ENCODE measurements at regions of chr3 and their contacts with region 1.

Region 1: GRCh38 chr3:108221911-108222852 is at the start of gene IFT57:
- DNase-seq: peak; percentile 95 to 99
- H3K4me3 ChIP-seq: peak within 1 kb of the TSS; percentile 67 to 79
- H3K27ac ChIP-seq: peak within 1 kb of the TSS; percentile 68 to 69
- H3K4me1 ChIP-seq: peaks cover 0 to 19% of the 10 kb centered on the region in 2 donors
- H3K27me3 ChIP-seq: no peaks in the 10 kb centered on the region
- CTCF ChIP-seq: no peak
- total RNA-seq, gene IFT57: 27.7 TPM

Region 2: GRCh38 chr3:107429320-107430181 is 792.6 kb before region 1 on chr3:
- intact Hi-C with region 1: loop called (anchors 5 kb)
- DNase-seq: peak; percentile 13 to 86
- H3K4me3 ChIP-seq: peak overlapping the region; percentile 84 to 85
- H3K27ac ChIP-seq: peak overlapping the region; percentile 99 to 100
- H3K4me1 ChIP-seq: peaks cover 0 to 9% of the 10 kb centered on the region in 2 donors
- H3K27me3 ChIP-seq: no peaks in the 10 kb centered on the region
- CTCF ChIP-seq: peak; percentile 78 to 85 (median 83)

Region 3: DNA sequence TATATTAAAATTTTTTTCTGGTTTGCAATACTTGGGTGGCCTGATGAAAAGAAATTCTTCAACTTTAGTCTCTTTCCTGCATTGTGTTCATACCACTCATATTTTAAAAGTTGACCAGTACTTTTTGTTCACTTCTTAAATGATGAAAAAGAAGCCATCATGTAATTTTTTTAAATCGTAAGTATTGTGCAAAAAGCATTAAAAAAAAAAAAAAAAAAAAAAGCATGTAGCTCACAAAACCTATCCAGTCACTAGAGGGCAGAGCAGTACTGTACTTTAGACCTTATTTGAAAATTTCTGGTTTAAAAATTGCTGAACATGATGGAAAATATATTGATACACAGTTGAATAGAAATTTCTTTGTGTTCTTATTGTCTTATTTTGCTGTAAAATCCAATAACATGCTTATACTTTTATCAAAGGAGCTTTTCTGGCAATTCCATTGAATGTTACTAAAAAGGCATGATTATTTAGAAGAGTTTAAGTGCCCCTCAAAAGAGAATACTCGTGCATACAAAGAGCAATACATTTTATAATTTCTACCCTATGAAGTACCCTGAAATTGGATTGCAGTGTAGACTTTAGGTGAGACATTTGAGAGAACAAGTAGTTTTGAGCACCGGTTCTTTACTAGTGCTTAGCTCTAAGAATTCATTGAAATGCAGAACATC is 561.7 kb before region 1 on chr3:
- intact Hi-C with region 1: loop called (anchors 10 kb)
- DNase-seq: no peak
- H3K4me3 ChIP-seq: no peak overlapping the region
- H3K27ac ChIP-seq: no peak overlapping the region
- H3K4me1 ChIP-seq: peaks cover 3 to 33% of the 10 kb centered on the region in 2 donors
- H3K27me3 ChIP-seq: no peaks in the 10 kb centered on the region
- CTCF ChIP-seq: peak; percentile 24 to 67 (median 56)

Region 4: GRCh38 chr3:107927361-107928083 is 294.7 kb before region 1 on chr3:
- intact Hi-C with region 1: loop called (anchors 5 kb)
- DNase-seq: peak in 1 of 2 donors; percentile 83
- H3K4me3 ChIP-seq: peak overlapping the region; percentile 51 to 75
- H3K27ac ChIP-seq: no peak overlapping the region
- H3K4me1 ChIP-seq: no peaks in the 10 kb centered on the region
- H3K27me3 ChIP-seq: no peaks in the 10 kb centered on the region
- CTCF ChIP-seq: peak; percentile 70 to 96 (median 91)

Region 5: DNA sequence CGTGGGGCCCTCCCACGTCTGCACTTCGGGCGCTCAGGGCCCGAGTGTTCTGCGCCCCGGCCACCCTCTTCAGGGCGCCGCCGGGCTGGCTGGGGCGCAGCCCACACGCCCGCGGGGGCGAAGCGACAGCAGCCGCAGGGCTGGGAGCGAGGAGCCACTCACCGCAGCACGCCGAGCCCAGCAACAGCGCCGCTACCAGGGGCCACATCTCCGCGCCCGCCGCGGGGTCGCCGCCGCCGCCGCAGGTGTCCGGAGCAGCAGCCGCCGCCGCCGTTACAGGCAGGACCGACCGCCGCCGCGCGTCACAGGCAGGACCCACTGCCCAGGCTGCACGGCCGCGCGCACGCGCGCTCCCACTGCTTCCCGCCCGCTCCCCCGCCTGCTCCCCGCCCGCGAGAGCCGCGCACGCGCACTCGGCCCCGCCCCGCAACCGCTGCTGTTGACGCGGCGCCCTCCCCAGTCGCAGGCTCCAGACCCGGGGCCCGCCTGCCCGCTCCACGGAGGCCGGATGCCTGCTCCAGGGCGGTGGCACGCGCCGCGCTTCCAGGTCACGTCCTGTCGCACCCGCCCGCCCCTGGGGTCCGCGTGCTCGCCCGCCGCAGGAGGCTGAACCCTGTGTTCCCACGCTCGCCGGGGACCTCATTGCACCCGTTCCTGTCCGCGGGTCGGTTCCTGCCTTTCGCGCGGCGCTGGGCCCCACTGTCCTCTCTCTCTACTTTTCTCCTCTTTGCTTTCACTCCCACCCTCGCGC is 131.3 kb before region 1 on chr3 and contains the start of gene CD47:
- intact Hi-C with region 1: loop called (anchors 1 kb)
- DNase-seq: peak; percentile 75 to 97
- H3K4me3 ChIP-seq: peak within 1 kb of the TSS; percentile 92 to 100
- H3K27ac ChIP-seq: peak within 1 kb of the TSS; percentile 86 to 96
- H3K4me1 ChIP-seq: peaks cover 0 to 6% of the 10 kb centered on the region in 2 donors
- H3K27me3 ChIP-seq: no peaks in the 10 kb centered on the region
- CTCF ChIP-seq: no peak
- total RNA-seq, gene CD47: 24.5 TPM

Region 6: GRCh38 chr3:108180194-108180593 is 42.0 kb before region 1 on chr3:
- intact Hi-C with region 1: no loop called
- DNase-seq: no peak
- H3K4me3 ChIP-seq: no peak overlapping the region
- H3K27ac ChIP-seq: no peak overlapping the region
- H3K4me1 ChIP-seq: no peaks in the 10 kb centered on the region
- H3K27me3 ChIP-seq: no peaks in the 10 kb centered on the region
- CTCF ChIP-seq: no peak